CD4-positive, alpha-beta T cell (primary cell): ENCODE measurements at regions of chr14 and their contacts with region 1.

Region 1: GRCh38 chr14:102028421-102029172 is 58.2 kb downstream of the HSP90AA1 start:
- DNase-seq: no peak
- ATAC-seq: no peak
- H3K4me3 ChIP-seq: no peak overlapping the region
- H3K4me3 Mint-ChIP-seq: no peak overlapping the region
- H3K27ac ChIP-seq: no peak overlapping the region
- H3K27ac Mint-ChIP-seq: no peak overlapping the region
- H3K4me1 ChIP-seq: no peaks in the 10 kb centered on the region
- H3K4me1 Mint-ChIP-seq: no peaks in the 10 kb centered on the region
- H3K27me3 ChIP-seq: no peaks in the 10 kb centered on the region
- H3K27me3 Mint-ChIP-seq: no peaks in the 10 kb centered on the region
- CTCF ChIP-seq: no peak

Region 2: GRCh38 chr14:101986953-101987352 is 41.6 kb before region 1 on chr14:
- CTCF ChIA-PET with region 1: no interaction called
- POLR2A ChIA-PET with region 1: no interaction called
- intact Hi-C with region 1: loop called in 1 of 2 experiments (anchors 5 kb)
- DNase-seq: no peak
- ATAC-seq: no peak
- H3K4me3 ChIP-seq: no peak overlapping the region
- H3K4me3 Mint-ChIP-seq: no peak overlapping the region
- H3K27ac ChIP-seq: no peak overlapping the region
- H3K27ac Mint-ChIP-seq: no peak overlapping the region
- H3K4me1 ChIP-seq: no peaks in the 10 kb centered on the region
- H3K4me1 Mint-ChIP-seq: no peaks in the 10 kb centered on the region
- H3K27me3 ChIP-seq: no peaks in the 10 kb centered on the region
- H3K27me3 Mint-ChIP-seq: no peaks in the 10 kb centered on the region
- CTCF ChIP-seq: no peak

Region 3: DNA sequence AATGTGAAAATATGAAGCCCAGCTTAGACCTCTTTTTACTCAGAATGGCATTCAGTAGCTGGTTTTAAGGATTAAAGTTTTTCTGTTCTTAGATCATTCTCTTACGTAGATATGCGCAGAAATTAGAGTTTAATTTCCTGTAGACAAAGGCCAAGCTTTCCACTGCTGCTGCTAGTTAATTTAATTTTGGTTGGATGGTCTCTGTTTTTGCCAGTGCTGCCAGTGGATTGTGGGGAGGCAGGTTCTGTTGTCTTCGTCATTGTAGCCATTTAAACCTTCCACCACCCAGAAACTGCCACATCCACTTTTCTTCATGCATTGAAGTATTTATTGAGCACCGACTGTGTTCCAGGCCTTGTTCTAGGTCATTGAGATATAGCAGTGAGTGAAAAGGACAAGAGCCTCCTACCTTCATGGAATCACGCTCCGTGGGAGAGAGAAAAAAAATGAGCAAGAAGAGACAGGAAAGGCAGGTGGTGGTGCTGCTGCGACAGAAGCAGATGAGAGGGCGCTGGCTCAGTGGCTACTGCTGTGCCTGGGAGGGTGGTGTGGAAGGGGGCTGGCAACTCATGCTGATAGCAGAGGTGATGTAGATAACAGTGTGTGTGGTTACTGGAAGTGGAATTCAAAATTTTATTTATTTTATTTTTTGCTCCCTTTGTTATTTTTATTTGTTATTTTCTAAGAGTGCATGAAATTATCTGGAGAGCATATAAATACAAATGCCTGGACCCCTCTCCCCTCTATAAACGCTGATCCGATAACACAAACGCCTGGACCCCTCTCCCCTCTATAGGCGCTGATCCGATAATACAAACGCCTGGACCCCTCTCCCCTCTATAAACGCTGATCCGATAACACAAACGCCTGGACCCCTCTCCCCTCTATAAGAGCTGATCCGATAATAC is 30.9 kb before region 1 on chr14:
- CTCF ChIA-PET with region 1: no interaction called
- POLR2A ChIA-PET with region 1: no interaction called
- intact Hi-C with region 1: no loop called
- DNase-seq: no peak
- ATAC-seq: no peak
- H3K4me3 ChIP-seq: no peak overlapping the region
- H3K4me3 Mint-ChIP-seq: no peak overlapping the region
- H3K27ac ChIP-seq: no peak overlapping the region
- H3K27ac Mint-ChIP-seq: no peak overlapping the region
- H3K4me1 ChIP-seq: no peaks in the 10 kb centered on the region
- H3K4me1 Mint-ChIP-seq: no peaks in the 10 kb centered on the region
- H3K27me3 ChIP-seq: no peaks in the 10 kb centered on the region
- H3K27me3 Mint-ChIP-seq: no peaks in the 10 kb centered on the region
- CTCF ChIP-seq: no peak

Region 4: GRCh38 chr14:102086972-102087761 is 58.6 kb after region 1 on chr14 and contains the start of gene HSP90AA1:
- CTCF ChIA-PET with region 1: no interaction called
- POLR2A ChIA-PET with region 1: no interaction called
- intact Hi-C with region 1: loop called in 1 of 2 experiments (anchors 10 kb)
- DNase-seq: peak; percentile 88 to 98 (median 94)
- ATAC-seq: peak; percentile 77
- H3K4me3 ChIP-seq: peak within 1 kb of the TSS; percentile 74
- H3K4me3 Mint-ChIP-seq: peak within 1 kb of the TSS; percentile 98
- H3K27ac ChIP-seq: peak within 1 kb of the TSS; percentile 95 to 98
- H3K27ac Mint-ChIP-seq: peak within 1 kb of the TSS; percentile 91
- H3K4me1 ChIP-seq: peaks cover 51% of the 10 kb centered on the region
- H3K4me1 Mint-ChIP-seq: peaks cover 64% of the 10 kb centered on the region
- H3K27me3 ChIP-seq: no peaks in the 10 kb centered on the region
- H3K27me3 Mint-ChIP-seq: no peaks in the 10 kb centered on the region
- CTCF ChIP-seq: no peak
- total RNA-seq, gene HSP90AA1: 451 to 462 TPM